AG04450 (cell line): ENCODE measurements at regions of chr12 and their contacts with region 1.

Region 1: DNA sequence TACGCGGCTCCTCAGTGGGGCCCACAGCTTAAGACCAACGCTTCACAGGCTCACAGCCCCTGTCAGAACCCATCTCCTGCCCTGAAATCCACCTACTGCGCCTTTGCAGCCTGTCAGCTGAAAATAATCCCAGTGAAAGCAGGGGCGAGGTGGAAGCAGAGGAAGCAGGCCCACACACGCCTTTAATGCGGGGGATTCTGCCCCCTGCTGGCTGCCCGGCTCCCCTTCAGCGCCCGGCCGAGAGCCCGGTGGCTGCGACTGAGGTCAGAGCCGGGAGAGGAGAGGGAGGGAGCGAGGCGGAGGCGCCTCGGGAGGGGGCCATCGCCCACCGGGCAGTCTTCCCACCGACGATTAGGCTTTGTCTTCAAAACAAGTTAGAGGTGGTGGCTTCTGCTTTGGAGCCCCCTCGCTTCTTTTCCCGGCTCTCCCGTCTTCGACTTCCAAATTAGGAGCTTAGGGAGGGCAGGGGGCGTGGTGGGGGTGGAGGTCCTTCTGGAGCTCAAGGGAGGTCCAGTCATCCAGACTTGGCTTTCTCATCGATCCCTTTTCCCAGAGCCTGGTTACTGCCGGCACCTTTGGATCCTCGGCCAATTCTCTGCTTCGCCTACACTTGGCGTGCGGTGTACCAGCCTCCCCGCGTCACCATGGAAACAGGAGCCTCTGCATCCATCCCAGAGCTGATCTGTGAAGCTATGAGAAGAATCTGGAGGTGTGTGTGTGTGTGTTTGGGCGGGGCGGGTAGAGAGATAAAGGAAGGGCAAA is 25.2 kb upstream of the RND1 start:
- DNase-seq: peak; percentile 27
- H3K4me3 ChIP-seq: peak overlapping the region; percentile 47
- H3K27ac ChIP-seq: no peak overlapping the region
- H3K27me3 ChIP-seq: peaks cover 9% of the 10 kb centered on the region
- CTCF ChIP-seq: peak; percentile 94

Region 2: DNA sequence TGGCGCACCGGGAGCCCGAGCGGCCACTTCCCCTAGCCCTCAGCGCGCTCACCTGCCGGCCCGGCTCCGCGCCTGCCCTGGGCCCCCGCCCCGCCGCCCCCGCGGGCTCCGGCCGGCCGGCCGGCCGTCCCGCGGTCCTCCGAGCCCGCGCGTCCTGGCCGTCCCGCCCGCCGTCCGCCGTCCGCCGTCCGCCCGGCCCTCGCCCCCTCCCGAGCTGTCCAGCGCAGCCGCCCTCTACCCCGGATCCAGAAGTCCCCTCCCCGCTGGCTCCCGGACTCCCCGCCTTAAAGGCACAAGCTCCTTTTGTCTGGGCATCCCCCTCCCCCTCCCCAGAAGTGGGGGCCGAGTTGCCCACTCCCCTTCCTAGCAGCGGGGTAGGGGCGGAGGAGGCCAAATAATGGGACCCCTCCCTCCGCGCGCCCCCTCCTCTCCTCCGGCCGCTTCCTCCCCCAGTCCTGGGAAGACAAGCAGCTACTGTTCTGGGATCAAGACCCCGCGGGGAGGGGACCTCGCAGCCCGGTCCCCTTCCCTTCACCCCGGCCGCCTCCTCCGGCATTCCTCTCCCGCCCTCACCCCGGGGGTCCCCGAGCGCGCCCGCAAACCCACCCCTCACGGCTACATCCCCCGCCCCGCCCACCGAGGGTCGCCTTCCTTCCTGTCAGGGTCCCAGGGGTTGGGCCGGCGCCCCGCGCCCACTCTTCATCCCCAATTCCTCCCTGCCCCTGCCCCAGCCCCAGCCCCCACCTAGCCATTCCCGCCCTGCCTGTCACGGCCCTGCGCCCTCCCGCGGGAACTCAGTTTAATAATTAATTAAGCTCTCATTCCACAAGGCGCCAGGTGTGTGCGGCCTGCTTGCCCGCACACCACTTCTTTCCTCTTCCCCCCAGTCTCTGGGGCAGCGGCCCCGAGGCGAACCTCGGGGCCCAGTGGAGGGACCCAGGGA is 101.7 kb before region 1 on chr12 and contains the start of gene ADCY6:
- CTCF ChIA-PET with region 1: no interaction called
- POLR2A ChIA-PET with region 1: no interaction called
- DNase-seq: no peak
- H3K4me3 ChIP-seq: peak within 1 kb of the TSS; percentile 75
- H3K27ac ChIP-seq: no peak within 1 kb of the TSS
- H3K27me3 ChIP-seq: no peaks in the 10 kb centered on the region
- CTCF ChIP-seq: no peak
- polyA plus RNA-seq, gene ADCY6: 26.7 and 31.6 TPM in 2 replicates

Region 3: DNA sequence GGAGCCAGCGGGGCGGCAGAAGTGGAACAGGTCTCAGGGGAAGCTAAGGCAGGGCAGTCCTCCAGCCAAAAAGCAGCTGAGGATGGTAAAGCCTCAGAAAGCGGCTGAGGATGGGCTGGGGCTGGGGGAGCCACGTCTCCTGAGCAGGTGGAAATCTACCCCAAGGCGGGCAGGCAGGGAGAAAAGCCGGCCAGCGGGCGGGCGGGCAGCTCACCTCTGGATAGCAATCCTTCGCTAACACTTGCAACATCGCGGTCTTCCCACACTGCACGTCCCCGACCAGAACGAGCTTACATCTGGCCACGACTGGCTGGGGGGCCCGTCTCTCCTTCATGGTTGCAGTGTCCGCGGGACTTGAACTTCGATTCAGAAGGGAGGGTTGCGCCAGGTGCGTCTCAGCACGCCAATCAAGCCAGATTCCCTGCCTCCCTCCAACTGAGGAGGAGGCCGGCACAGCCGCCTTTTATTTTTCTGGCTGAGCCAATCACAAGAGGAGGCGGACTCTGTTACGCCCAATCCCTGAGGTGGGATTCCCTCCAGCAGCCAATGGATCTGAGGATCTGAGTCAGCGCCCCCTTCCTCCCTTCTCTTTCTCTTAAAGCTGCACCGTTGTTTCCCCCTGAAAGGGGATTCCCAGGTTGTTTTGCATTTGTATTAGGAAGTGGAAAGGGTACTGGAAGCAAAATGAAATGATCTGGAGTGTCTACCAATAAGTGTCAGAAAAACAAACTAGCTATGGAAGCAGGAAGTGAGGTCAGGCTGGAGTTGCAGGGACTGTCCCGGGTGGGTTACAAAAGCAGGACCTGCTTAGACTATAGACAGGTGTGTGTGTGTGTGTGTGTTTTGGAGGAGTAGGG is 25.2 kb before region 1 on chr12 and contains the start of gene RND1:
- CTCF ChIA-PET with region 1: interaction called, 411 read pairs
- POLR2A ChIA-PET with region 1: no interaction called
- DNase-seq: peak; percentile 70
- H3K4me3 ChIP-seq: peak within 1 kb of the TSS; percentile 66
- H3K27ac ChIP-seq: no peak within 1 kb of the TSS
- H3K27me3 ChIP-seq: peaks cover 36% of the 10 kb centered on the region
- CTCF ChIP-seq: peak; percentile 32
- polyA plus RNA-seq, gene RND1: 0.36 and 0.42 TPM in 2 replicates

Region 4: GRCh38 chr12:48903982-48904411 is 13.2 kb after region 1 on chr12:
- CTCF ChIA-PET with region 1: interaction called, 93 read pairs
- POLR2A ChIA-PET with region 1: no interaction called
- DNase-seq: peak; percentile 62
- H3K4me3 ChIP-seq: peak overlapping the region; percentile 60
- H3K27ac ChIP-seq: no peak overlapping the region
- H3K27me3 ChIP-seq: no peaks in the 10 kb centered on the region
- CTCF ChIP-seq: peak; percentile 78

Region 5: DNA sequence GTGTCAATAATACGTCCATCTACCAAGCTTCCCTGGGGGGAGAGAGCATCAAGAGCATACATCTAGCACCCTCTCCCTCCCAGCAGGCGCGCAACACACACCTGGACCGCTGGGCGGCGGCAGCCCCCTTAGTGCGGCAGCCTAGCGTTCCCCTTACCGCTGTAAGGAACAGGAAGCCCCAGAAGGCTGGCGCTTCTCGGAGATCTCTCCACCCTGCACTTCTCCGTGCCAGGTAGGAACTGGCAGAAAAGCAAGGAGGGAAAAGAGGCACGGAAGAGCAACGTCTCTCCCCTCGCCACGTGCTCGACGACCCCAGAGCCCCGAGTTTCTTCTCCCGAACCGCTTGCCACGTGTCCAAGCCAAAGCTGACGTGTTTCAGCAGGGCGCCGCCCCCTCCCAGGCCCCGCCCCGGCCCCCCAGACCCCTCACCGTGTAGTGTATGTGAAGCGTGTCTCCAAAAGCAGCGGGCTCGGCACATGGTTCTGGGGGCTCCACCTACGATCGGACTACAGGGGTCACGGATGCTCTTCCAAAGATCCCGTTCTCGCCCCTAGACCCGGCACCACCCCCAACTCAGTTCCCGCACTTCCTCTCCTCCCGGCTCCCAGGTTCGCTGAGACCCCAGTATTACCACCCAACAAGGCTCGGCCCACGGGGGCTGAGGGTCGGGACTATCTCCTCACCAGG is 33.9 kb after region 1 on chr12:
- CTCF ChIA-PET with region 1: interaction called, 29 read pairs
- POLR2A ChIA-PET with region 1: interaction called, 3 read pairs
- DNase-seq: no peak
- H3K4me3 ChIP-seq: peak overlapping the region; percentile 81
- H3K27ac ChIP-seq: peak overlapping the region; percentile 11
- H3K27me3 ChIP-seq: no peaks in the 10 kb centered on the region
- CTCF ChIP-seq: peak; percentile 65

Region 6: GRCh38 chr12:48973941-48974673 is 83.3 kb after region 1 on chr12:
- CTCF ChIA-PET with region 1: no interaction called
- POLR2A ChIA-PET with region 1: no interaction called
- DNase-seq: no peak
- H3K4me3 ChIP-seq: no peak overlapping the region
- H3K27ac ChIP-seq: no peak overlapping the region
- H3K27me3 ChIP-seq: peaks cover 53% of the 10 kb centered on the region
- CTCF ChIP-seq: peak; percentile 69

Region 7: DNA sequence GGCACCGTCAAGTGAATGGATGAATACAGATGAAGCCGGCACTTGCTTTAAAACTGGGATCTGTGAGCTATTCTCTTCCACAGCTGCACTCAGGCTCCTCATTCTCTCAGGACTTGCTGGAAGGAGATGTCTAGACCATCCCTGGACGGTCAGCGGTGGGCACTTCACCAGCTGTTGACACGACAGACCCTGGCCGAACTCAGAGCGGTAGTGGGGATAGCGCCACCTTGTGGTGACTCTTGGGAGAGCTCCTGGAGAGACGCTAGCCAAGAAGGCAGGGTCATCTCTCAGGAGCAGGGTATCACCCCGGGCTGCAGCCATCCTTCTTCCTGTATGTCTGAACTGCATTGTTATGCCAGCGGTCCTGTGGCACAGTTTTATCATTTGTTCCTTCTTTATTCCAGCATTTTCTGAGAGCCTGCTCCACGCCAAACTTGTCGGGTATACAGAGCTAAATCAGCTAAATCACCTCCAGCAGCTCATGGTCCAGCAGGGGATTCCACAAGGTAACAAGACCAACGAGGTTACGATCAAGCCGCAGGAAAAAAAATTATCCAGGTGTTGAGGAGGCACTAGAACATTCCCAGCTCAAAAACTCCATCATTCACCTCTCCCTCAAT is 97.3 kb after region 1 on chr12:
- CTCF ChIA-PET with region 1: interaction called, 10 read pairs
- POLR2A ChIA-PET with region 1: no interaction called
- DNase-seq: no peak
- H3K4me3 ChIP-seq: no peak overlapping the region
- H3K27ac ChIP-seq: no peak overlapping the region
- H3K27me3 ChIP-seq: peaks cover 61% of the 10 kb centered on the region
- CTCF ChIP-seq: peak; percentile 87

Region 8: DNA sequence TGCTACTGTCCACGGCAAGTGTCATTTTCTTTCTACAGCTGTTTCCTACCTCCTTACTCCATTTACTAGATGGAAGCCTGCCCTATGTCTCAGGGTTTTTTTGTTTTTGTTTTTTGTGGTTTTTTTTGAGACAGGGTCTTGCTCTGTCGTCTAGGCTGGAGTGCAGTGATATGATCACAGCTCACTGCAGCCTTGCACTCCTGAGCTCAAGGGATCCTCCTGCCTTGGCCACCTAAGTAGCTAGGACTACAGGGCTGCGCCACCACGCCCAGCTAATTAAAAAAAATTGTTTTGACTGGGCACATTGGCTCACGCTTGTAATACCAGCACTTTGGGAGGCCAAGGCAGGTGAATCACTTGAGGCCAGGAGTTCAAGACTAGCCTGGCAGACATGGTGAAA is 283.4 kb after region 1 on chr12:
- CTCF ChIA-PET with region 1: no interaction called
- POLR2A ChIA-PET with region 1: no interaction called
- DNase-seq: no peak
- H3K4me3 ChIP-seq: no peak overlapping the region
- H3K27ac ChIP-seq: no peak overlapping the region
- H3K27me3 ChIP-seq: no peaks in the 10 kb centered on the region
- CTCF ChIP-seq: no peak